HCT116 (cell line): ENCODE measurements at regions of chr12 and their contacts with region 1.

Region 1: DNA sequence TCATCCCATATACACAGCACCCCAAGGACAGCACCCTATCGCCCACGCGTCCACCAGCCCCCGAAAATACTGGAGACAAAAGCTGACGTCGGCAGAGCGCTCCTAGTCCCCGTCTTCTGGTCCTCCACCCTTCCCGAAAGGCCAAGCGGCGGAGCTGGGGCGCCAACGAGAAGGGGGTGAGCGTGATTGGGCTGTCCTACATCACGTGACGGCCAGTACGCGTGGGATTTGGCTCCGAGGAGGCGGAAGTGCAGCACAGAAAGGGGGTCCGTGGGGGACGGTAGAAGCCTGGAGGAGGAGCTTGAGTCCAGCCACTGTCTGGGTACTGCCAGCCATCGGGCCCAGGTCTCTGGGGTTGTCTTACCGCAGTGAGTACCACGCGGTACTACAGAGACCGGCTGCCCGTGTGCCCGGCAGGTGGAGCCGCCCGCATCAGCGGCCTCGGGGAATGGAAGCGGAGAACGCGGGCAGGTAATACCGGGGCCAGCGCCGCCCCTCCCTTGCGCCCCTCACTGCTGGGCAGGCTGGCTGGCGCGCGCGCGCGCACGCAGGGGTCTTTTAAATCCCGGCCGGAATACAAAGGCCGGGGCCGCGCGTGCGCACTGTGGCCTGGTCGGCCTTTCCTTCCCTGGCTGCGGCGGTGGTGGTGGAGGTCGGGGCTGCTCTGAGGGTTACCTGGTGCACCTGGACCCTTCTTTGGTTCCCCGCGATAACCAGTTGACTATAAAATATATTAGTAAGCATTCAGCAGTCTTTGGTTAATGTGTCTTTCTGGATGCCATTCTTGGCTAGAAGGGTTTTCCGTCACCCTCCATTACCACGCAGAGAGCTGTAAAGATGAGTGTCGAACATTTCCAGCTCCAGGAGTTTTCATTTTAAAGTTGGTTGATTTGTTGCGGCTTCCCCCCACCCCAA is at the start of gene TDG:
- DNase-seq: peak; percentile 98
- ATAC-seq: peak; percentile 95
- H3K4me3 ChIP-seq: peak within 1 kb of the TSS; percentile 88 to 90
- H3K27ac ChIP-seq: peak within 1 kb of the TSS; percentile 78
- H3K4me1 ChIP-seq: peaks cover 5 to 23% of the 10 kb centered on the region in 2 experiments; a peak in 3 of 4 replicates
- H3K27me3 ChIP-seq: no peaks in the 10 kb centered on the region
- CTCF ChIP-seq: 0 out of 6 replicates have a peak, but pooled peaks of 1 of the 3 experiments have one; percentile 5
- POLR2A ChIP-seq: peak; percentile 90
- RAD21 ChIP-seq: no peak
- total RNA-seq, gene TDG: 23.9 TPM

Region 2: DNA sequence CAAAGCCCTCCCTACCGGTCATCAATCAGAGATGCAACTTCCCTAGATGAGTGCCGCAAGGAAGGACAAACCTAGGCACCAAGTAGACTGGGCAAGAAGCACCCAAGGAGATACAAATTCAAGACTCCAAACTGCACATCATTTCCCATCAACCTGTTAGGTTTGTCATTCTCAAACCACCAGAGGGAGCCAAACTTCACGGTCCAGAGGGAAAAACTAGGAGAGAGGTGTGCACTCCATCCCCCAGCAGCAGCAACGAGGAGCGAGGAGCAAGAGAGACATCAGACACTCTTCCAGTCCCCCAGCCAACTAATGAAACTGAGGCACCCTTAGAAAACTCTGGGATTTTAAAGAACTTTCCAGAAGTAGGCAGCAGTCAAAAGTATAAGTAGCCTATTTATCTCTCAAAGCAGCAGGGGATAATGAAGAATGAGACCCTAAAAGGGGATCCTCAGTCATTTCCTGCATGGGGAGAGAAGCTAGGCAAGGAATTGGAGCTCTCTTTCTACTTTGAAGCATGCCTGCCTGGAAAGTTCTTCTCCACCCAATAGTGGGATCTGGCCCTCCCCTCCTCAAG is 87.8 kb before region 1 on chr12:
- CTCF ChIA-PET with region 1: no interaction called
- POLR2A ChIA-PET with region 1: no interaction called
- RAD21 ChIA-PET with region 1: no interaction called
- intact Hi-C with region 1: loop called (anchors 5 kb)
- DNase-seq: peak; percentile 64
- ATAC-seq: peak; percentile 99
- H3K4me3 ChIP-seq: no peak overlapping the region
- H3K27ac ChIP-seq: no peak overlapping the region
- H3K4me1 ChIP-seq: peaks cover 0 to 4% of the 10 kb centered on the region in 2 experiments; a peak in 1 of 4 replicates
- H3K27me3 ChIP-seq: no peaks in the 10 kb centered on the region
- CTCF ChIP-seq: peak; percentile 71 to 87 (median 79)
- POLR2A ChIP-seq: no peak
- RAD21 ChIP-seq: peak; percentile 92

Region 3: GRCh38 chr12:103908866-103909265 is 57.0 kb before region 1 on chr12:
- CTCF ChIA-PET with region 1: no interaction called
- POLR2A ChIA-PET with region 1: no interaction called
- RAD21 ChIA-PET with region 1: no interaction called
- intact Hi-C with region 1: no loop called
- DNase-seq: no peak
- ATAC-seq: no peak
- H3K4me3 ChIP-seq: no peak overlapping the region
- H3K27ac ChIP-seq: no peak overlapping the region
- H3K4me1 ChIP-seq: no peaks in the 10 kb centered on the region
- H3K27me3 ChIP-seq: no peaks in the 10 kb centered on the region
- CTCF ChIP-seq: no peak
- POLR2A ChIP-seq: no peak
- RAD21 ChIP-seq: no peak

Region 4: DNA sequence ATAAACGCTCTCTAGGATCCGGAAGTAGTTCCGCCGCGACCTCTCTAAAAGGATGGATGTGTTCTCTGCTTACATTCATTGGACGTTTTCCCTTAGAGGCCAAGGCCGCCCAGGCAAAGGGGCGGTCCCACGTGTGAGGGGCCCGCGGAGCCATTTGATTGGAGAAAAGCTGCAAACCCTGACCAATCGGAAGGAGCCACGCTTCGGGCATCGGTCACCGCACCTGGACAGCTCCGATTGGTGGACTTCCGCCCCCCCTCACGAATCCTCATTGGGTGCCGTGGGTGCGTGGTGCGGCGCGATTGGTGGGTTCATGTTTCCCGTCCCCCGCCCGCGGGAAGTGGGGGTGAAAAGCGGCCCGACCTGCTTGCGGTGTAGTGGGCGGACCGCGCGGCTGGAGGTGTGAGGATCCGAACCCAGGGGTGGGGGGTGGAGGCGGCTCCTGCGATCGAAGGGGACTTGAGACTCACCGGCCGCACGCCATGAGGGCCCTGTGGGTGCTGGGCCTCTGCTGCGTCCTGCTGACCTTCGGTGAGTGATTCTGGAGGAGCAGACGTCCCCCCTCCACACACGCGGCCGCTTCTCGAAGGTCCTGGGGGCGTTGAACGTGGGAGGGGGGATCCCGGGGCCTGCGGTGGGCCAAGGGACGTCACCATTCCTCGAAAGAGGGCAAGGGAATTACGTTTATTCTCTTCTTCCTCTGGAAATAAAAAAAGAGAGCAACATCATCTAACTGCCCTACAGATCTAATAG is 35.6 kb before region 1 on chr12 and contains the start of gene HSP90B1:
- CTCF ChIA-PET with region 1: interaction called, 5 read pairs
- POLR2A ChIA-PET with region 1: interaction called, 16 read pairs
- RAD21 ChIA-PET with region 1: no interaction called
- intact Hi-C with region 1: no loop called
- DNase-seq: peak; percentile 100
- ATAC-seq: peak; percentile 89
- H3K4me3 ChIP-seq: peak within 1 kb of the TSS; percentile 84 to 86
- H3K27ac ChIP-seq: peak within 1 kb of the TSS; percentile 68
- H3K4me1 ChIP-seq: peaks cover 8 to 27% of the 10 kb centered on the region in 2 experiments
- H3K27me3 ChIP-seq: no peaks in the 10 kb centered on the region
- CTCF ChIP-seq: no peak
- POLR2A ChIP-seq: peak; percentile 68
- RAD21 ChIP-seq: no peak
- total RNA-seq, gene HSP90B1: 888 TPM

Region 5: DNA sequence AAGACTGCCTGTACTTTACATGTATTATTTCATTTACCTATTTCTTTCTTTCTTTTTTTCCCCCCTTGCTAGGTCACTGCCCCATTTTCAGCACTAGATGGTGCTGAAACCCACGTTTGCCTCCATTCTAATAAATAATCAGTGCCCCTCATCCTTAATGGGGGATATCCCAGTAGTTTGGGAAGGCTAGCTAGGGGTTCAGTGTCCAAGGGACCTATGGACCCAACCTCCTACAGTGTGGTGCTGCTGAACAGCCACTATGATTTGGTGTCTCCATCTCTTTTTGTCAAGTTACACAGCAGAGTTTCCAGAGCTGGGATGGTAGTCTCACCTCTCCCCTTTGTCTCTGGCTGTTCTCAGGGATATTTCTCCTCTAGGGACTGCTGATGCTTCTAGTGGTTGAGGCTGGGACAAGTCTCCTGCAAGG is 91.9 kb after region 1 on chr12:
- CTCF ChIA-PET with region 1: no interaction called
- POLR2A ChIA-PET with region 1: no interaction called
- RAD21 ChIA-PET with region 1: no interaction called
- intact Hi-C with region 1: loop called (anchors 1 kb)
- DNase-seq: no peak
- ATAC-seq: peak; percentile 76
- H3K4me3 ChIP-seq: no peak overlapping the region
- H3K27ac ChIP-seq: no peak overlapping the region
- H3K4me1 ChIP-seq: no peaks in the 10 kb centered on the region
- H3K27me3 ChIP-seq: no peaks in the 10 kb centered on the region
- CTCF ChIP-seq: peak; percentile 78 to 86 (median 79)
- POLR2A ChIP-seq: no peak
- RAD21 ChIP-seq: peak; percentile 87